ENCODE measurements at regions of chr4 and their contacts with region 1.

Region 1: DNA sequence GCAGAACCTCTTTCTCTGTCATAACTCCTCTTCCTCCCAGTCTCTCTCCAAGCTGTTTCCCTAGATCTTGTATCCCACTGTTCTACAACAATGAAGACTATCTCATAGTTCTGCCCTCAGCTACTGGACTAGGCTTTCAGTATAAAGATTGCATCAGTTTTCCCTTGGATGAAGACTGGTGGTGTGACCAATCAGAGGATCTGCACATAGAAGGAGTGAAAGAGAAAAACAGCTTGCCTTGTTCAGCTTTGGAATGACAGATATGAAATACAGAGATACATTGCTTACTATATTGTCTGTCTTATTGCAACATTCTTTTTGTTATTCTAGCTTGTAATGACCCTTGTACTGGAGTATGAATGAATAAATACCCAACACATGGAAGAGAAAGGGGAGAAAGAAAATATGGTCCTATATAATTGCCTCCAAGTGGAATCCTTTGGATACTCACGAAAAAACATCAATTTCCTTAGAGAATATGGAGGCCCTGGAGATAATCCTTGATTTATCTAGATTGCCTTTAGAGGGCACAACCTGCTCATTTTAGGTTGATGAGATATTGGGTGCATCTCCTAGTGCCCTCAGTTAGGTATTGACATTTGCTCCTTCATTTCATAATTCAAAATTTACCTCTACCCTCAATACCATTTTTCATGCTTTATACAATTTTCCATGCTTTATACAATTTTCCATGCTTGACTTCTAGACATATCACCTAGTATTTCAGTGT is 395.8 kb downstream of the NAF1 start:
- DNase-seq: peak; percentile 2
- H3K4me3 ChIP-seq: no peak overlapping the region
- H3K27ac ChIP-seq: no peak overlapping the region
- H3K4me1 ChIP-seq: no peaks in the 10 kb centered on the region
- H3K27me3 ChIP-seq: no peaks in the 10 kb centered on the region
- CTCF ChIP-seq: no peak; the same call in 1 of the 2 replicates

Region 2: DNA sequence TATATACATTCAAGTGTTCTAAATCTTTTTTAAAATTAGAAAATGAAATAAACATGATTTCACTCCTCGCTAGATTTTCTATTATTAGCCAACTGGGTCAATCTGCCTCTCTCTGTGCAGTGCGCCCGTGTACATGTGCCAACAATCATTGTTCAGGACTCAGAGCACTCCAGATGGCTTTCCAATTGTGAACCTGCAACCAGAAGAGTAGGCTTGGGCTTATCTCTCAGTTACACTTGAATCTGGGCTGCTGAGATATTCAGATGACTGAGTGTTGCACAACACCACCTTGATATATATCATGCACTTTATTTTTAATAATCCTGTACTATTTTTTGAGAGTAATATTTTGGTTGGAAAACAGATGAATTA is 423.1 kb before region 1 on chr4:
- CTCF ChIA-PET with region 1: no interaction called
- POLR2A ChIA-PET with region 1: no interaction called
- intact Hi-C with region 1: no loop called
- DNase-seq: no peak
- H3K4me3 ChIP-seq: no peak overlapping the region
- H3K27ac ChIP-seq: no peak overlapping the region
- H3K4me1 ChIP-seq: no peaks in the 10 kb centered on the region
- H3K27me3 ChIP-seq: no peaks in the 10 kb centered on the region
- CTCF ChIP-seq: no peak

Region 3: GRCh38 chr4:162409048-162409447 is 361.9 kb before region 1 on chr4:
- CTCF ChIA-PET with region 1: no interaction called
- POLR2A ChIA-PET with region 1: no interaction called
- intact Hi-C with region 1: no loop called
- DNase-seq: no peak
- H3K4me3 ChIP-seq: no peak overlapping the region
- H3K27ac ChIP-seq: no peak overlapping the region
- H3K4me1 ChIP-seq: no peaks in the 10 kb centered on the region
- H3K27me3 ChIP-seq: no peaks in the 10 kb centered on the region
- CTCF ChIP-seq: no peak

Region 4: GRCh38 chr4:162475246-162475645 is 295.7 kb before region 1 on chr4:
- CTCF ChIA-PET with region 1: no interaction called
- POLR2A ChIA-PET with region 1: no interaction called
- intact Hi-C with region 1: no loop called
- DNase-seq: no peak
- H3K4me3 ChIP-seq: no peak overlapping the region
- H3K27ac ChIP-seq: no peak overlapping the region
- H3K4me1 ChIP-seq: no peaks in the 10 kb centered on the region
- H3K27me3 ChIP-seq: no peaks in the 10 kb centered on the region
- CTCF ChIP-seq: no peak

Region 5: GRCh38 chr4:162506253-162506652 is 264.7 kb before region 1 on chr4:
- CTCF ChIA-PET with region 1: no interaction called
- POLR2A ChIA-PET with region 1: no interaction called
- intact Hi-C with region 1: loop called (anchors 5 kb)
- DNase-seq: no peak
- H3K4me3 ChIP-seq: no peak overlapping the region
- H3K27ac ChIP-seq: no peak overlapping the region
- H3K4me1 ChIP-seq: no peaks in the 10 kb centered on the region
- H3K27me3 ChIP-seq: no peaks in the 10 kb centered on the region
- CTCF ChIP-seq: no peak

Measured in A673 (cell line).